Activated CD4-positive, alpha-beta T cell treated with anti-CD3 and anti-CD28 coated beads for 36 hours (primary cell): ENCODE measurements at regions of chr1 and their contacts with region 1.

Region 1: GRCh38 chr1:115642168-115643072 is 650 bp downstream of the VANGL1 start:
- DNase-seq: peak; percentile 56
- ATAC-seq: peak; percentile 45
- H3K4me3 Mint-ChIP-seq: peak overlapping the region; percentile 75
- H3K27ac Mint-ChIP-seq: no peak overlapping the region
- H3K4me1 Mint-ChIP-seq: peaks cover 11% of the 10 kb centered on the region
- H3K27me3 Mint-ChIP-seq: peaks cover 29% of the 10 kb centered on the region

Region 2: GRCh38 chr1:116122955-116123757 is 480.7 kb after region 1 on chr1:
- CTCF ChIA-PET with region 1: no interaction called
- POLR2A ChIA-PET with region 1: no interaction called
- intact Hi-C with region 1: loop called in 1 of 2 experiments (anchors 10 kb)
- DNase-seq: no peak
- ATAC-seq: no peak
- H3K4me3 Mint-ChIP-seq: no peak overlapping the region
- H3K27ac Mint-ChIP-seq: no peak overlapping the region
- H3K4me1 Mint-ChIP-seq: peaks cover 23% of the 10 kb centered on the region
- H3K27me3 Mint-ChIP-seq: peaks cover 18% of the 10 kb centered on the region

Region 3: GRCh38 chr1:116667575-116668105 is 1025.2 kb after region 1 on chr1 and contains the start of gene IGSF3:
- CTCF ChIA-PET with region 1: no interaction called
- POLR2A ChIA-PET with region 1: no interaction called
- intact Hi-C with region 1: loop called in 1 of 2 experiments (anchors 10 kb)
- DNase-seq: peak; percentile 76
- ATAC-seq: peak; percentile 92
- H3K4me3 Mint-ChIP-seq: peak within 1 kb of the TSS; percentile 69
- H3K27ac Mint-ChIP-seq: no peak within 1 kb of the TSS
- H3K4me1 Mint-ChIP-seq: peaks cover 10% of the 10 kb centered on the region
- H3K27me3 Mint-ChIP-seq: peaks cover 39% of the 10 kb centered on the region
- total RNA-seq, gene IGSF3: 3.8 to 4.1 TPM